ENCODE measurements at regions of chr10 and their contacts with region 1.

Region 1: DNA sequence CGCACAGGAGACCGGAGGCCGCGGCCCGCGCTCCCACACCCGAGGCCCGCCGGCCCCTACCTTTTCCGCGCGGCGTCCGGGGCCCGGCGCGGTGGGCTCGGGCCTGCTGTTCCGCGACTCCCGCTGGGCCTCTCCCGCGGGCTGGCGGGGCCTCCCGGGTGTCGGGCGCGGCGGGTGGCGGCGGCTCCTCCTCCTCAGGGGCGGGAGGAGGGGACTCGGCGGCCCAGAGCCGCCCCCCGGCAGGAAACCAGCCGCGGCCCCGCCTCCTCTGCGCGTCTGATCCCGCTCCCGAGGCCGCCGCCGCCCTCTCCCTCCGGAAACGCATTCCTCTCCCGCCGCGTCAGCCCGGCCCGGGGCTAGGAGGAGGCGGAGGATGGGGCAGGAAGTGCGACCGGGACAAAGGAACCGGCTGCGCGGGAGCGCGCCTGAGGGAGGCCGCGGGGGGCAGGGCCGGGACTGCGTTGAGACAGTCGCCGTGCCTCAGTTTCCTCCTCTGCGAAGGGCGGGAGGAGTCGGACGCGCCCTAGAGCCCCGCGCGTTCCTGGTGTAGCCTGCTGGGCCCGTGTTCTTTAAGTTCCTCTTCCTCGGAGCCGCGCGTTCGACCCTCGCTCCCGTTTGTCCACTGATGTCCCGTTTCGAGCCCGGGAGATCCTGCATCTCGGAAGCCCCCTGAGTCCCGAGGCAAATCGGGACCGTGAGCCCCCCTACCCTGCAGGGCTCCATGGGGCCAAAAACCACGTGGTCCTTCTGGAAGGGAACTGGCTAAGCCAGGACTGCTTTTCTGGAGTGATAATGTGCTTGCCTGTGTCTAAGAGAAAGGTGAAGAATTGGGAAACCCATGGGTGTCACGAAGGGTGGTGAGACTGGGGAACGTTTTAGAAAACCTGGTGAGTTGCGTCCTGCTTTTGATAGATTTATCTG is at the start of gene ITGB1:
- DNase-seq: peak; percentile 85
- H3K4me3 ChIP-seq: peak within 1 kb of the TSS; percentile 94
- H3K27ac ChIP-seq: peak within 1 kb of the TSS; percentile 79
- H3K4me1 ChIP-seq: peaks cover 61% of the 10 kb centered on the region
- CTCF ChIP-seq: no peak
- total RNA-seq, gene ITGB1: 165 and 179 TPM in 2 replicates

Region 2: GRCh38 chr10:32943854-32944661 is 14.3 kb before region 1 on chr10:
- CTCF ChIA-PET with region 1: interaction called, 3 read pairs
- POLR2A ChIA-PET with region 1: interaction called, 14 read pairs
- intact Hi-C with region 1: no loop called
- DNase-seq: no peak
- H3K4me3 ChIP-seq: peak overlapping the region; percentile 10
- H3K27ac ChIP-seq: peak overlapping the region; percentile 65
- H3K4me1 ChIP-seq: peaks cover 87% of the 10 kb centered on the region
- CTCF ChIP-seq: no peak

Region 3: GRCh38 chr10:32971536-32972091 is 13.3 kb after region 1 on chr10:
- CTCF ChIA-PET with region 1: no interaction called
- POLR2A ChIA-PET with region 1: interaction called, 57 read pairs
- intact Hi-C with region 1: loop called (anchors 2 kb)
- DNase-seq: peak; percentile 92
- H3K4me3 ChIP-seq: peak overlapping the region; percentile 59
- H3K27ac ChIP-seq: peak overlapping the region; percentile 99
- H3K4me1 ChIP-seq: peaks cover 71% of the 10 kb centered on the region
- CTCF ChIP-seq: no peak

Region 4: GRCh38 chr10:32980558-32981468 is 22.5 kb after region 1 on chr10:
- CTCF ChIA-PET with region 1: interaction called, 4 read pairs
- POLR2A ChIA-PET with region 1: interaction called, 68 read pairs
- intact Hi-C with region 1: no loop called
- DNase-seq: peak; percentile 90
- H3K4me3 ChIP-seq: peak overlapping the region; percentile 63
- H3K27ac ChIP-seq: peak overlapping the region; percentile 63
- H3K4me1 ChIP-seq: peaks cover 62% of the 10 kb centered on the region
- CTCF ChIP-seq: 0 out of 2 replicates have a peak, but pooled peaks have one; percentile 25